Gastrocnemius medialis (tissue), 4 donors: ENCODE measurements at regions of chr5 and their contacts with region 1.

Region 1: DNA sequence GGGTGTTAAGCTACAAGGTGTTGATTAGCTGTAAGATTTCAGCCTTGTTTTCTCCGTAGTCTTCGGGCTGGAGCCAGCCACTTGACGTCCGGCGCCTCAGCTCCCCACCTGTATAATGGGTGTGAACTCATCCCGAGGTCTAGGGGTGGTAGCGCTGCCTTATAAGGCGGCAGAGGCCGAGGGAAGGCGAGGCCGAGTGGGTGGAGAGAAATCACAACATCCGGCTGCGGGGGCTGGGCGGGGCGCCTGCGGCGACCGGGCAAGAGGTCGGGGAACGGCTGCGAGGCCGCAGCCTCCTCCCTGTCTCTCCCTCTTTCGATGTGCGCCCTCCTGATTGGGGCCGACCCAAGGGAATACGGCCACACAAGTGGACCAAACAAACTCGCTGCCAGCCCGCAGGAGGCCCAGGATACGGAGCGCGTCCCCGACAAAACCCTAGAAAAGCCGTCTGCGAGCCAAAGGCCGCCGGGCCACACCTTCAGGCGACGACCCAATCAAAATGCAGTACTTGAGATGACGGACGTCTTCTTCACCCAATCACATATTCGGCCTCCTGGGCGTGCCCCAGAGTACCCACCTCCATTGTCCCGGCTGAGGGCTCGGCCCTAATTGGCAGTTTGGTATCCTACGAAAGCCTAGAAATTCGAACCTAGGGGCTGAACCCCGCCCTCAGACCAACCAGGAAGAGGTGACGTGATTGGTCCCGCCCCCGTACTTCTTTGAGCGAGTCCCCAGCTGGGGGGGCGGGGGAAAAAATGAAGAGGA is 493 bp upstream of the GRK6 start:
- DNase-seq: peak; percentile 100
- ATAC-seq: peak; percentile 96 to 97
- H3K4me3 ChIP-seq: peak overlapping the region; percentile 59 to 64 (median 63)
- H3K27ac ChIP-seq: peak overlapping the region; percentile 87 to 93 (median 89)
- H3K4me1 ChIP-seq: peaks cover 24 to 26% of the 10 kb centered on the region in 2 donors
- H3K27me3 ChIP-seq: no peaks in the 10 kb centered on the region
- CTCF ChIP-seq: no peak
- POLR2A ChIP-seq: peak; percentile 71 to 78

Region 2: DNA sequence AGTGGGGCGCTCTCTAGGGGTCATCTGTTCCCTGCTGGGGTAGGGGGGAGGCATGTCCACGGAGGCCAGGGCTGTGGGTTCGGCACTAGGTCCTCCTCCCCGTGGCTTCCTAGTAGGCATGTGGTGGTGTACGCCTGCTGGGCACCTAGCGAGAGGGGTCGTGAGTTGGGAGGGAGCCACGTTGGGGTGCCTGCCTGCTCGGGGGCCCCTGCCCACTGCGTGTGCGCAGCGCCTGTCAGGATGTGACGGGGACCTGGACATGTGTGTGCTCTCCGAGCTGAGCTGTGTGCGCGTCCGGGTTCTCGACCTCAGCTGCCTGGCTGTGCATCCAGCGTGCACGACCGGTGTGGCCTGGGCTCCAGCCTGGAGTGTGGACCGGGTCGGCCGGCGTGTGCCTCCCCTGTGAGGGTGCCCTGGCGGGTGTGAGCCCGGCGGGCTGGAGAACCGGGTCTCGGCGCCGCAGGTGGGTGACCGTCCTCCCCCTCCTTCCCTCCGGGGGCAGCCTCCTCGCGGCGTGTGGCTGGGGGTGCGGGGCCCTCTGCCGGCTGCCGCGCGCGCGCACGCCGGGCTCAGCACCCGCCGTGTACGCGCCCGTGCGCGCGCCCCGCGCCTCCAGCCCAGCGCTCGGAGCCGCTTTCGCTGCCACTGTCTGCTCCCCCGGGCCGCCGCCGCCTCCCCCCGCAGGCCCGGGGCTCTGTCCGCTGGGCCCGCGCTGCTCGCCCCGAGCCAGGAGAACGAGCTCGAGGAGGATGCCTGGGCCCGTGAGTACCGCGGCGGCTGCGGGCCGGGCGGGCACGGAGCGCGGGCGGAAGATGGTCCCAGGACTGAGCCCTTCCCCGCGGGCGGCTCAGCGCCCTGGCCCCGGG is 20.4 kb after region 1 on chr5 and contains the start of gene PRR7:
- in situ Hi-C with region 1: no loop called
- intact Hi-C with region 1: loop called (anchors 2 kb)
- DNase-seq: no peak
- ATAC-seq: peak; percentile 55 to 67
- H3K4me3 ChIP-seq: peak within 1 kb of the TSS; percentile 47 to 68 (median 54)
- H3K27ac ChIP-seq: no peak within 1 kb of the TSS
- H3K4me1 ChIP-seq: peaks cover 12 to 19% of the 10 kb centered on the region in 2 donors
- H3K27me3 ChIP-seq: peaks cover 7 to 33% (median 21%) of the 10 kb centered on the region in 3 donors
- CTCF ChIP-seq: peak in 1 of 5 experiments; percentile 29
- POLR2A ChIP-seq: peak in 1 of 2 donors; percentile 17
- total RNA-seq, gene PRR7: 0.63 to 2.0 (median 1.4) TPM in 3 of 4 donors, not detected in the other